HepG2 (cell line): ENCODE measurements at regions of chr13 and their contacts with region 1.

Region 1: DNA sequence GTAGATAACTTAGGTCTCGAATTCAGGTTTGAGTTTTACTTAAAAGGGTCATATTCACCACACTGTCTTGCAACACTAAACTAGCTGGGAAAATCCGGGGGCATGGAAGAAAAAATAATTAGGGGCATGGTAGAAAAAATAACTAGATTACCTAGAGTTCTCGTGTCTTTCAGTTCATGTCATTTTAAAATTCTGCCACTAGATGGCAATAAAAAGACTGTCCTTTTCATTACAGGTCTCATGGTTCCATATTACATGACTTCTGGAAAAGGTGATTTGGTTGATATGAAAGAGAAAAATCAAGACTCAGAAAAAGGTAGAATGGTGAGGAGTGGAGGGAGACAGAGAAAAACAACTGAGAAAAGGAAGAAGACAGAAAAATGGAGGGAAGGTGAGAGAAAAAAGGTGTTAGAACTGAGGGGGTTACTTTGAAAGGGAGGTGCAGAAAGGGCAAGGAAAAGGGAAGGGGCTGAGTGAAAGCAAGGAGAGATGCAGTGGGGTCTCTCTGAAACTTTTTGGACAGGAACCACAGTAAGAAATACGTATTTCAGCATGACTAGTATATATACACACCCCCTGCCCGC is 299.0 kb downstream of the KLF12 start:
- DNase-seq: peak; percentile 39
- ATAC-seq: peak; percentile 69
- H3K4me3 ChIP-seq: no peak overlapping the region
- H3K27ac ChIP-seq: no peak overlapping the region
- H3K4me1 ChIP-seq: no peaks in the 10 kb centered on the region
- H3K27me3 ChIP-seq: no peaks in the 10 kb centered on the region
- CTCF ChIP-seq: peak; percentile 63
- EP300 ChIP-seq: no peak
- POLR2A ChIP-seq: no peak
- RAD21 ChIP-seq: no peak

Region 2: GRCh38 chr13:73465617-73465971 is 369.6 kb before region 1 on chr13:
- CTCF ChIA-PET with region 1: no interaction called
- POLR2A ChIA-PET with region 1: no interaction called
- in situ Hi-C with region 1: no loop called
- intact Hi-C with region 1: no loop called
- DNase-seq: no peak
- ATAC-seq: no peak
- H3K4me3 ChIP-seq: no peak overlapping the region
- H3K27ac ChIP-seq: no peak overlapping the region
- H3K4me1 ChIP-seq: no peaks in the 10 kb centered on the region
- H3K27me3 ChIP-seq: no peaks in the 10 kb centered on the region
- CTCF ChIP-seq: no peak
- EP300 ChIP-seq: no peak
- POLR2A ChIP-seq: no peak
- RAD21 ChIP-seq: no peak

Region 3: DNA sequence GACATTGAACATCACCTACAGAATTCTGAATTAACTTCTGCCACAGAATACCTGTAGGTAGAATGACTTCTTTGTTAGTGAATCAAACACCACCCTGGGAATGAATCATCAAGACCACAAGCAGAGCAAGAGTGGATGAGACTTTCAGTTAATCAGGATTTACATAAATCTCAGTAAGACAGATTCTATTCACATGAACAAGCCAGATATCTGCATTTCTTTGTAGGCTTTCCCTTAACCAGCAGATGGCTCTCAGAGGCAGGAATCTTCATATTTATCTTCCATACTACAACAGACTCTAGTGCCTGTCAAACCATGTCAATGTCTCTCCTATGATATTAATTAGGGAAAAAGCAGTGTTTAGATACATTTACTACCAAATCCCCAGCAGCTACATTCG is 113.1 kb before region 1 on chr13:
- CTCF ChIA-PET with region 1: no interaction called
- POLR2A ChIA-PET with region 1: no interaction called
- in situ Hi-C with region 1: no loop called
- intact Hi-C with region 1: no loop called
- DNase-seq: peak; percentile 5
- ATAC-seq: 0 out of 3 replicates have a peak, but pooled peaks have one; percentile 40
- H3K4me3 ChIP-seq: no peak overlapping the region
- H3K27ac ChIP-seq: no peak overlapping the region
- H3K4me1 ChIP-seq: peaks cover 10% of the 10 kb centered on the region; the same call in 1 of the 2 replicates
- H3K27me3 ChIP-seq: no peaks in the 10 kb centered on the region
- CTCF ChIP-seq: no peak
- EP300 ChIP-seq: no peak
- POLR2A ChIP-seq: no peak
- RAD21 ChIP-seq: no peak

Region 4: GRCh38 chr13:73820688-73821087 is 14.5 kb before region 1 on chr13:
- CTCF ChIA-PET with region 1: no interaction called
- POLR2A ChIA-PET with region 1: no interaction called
- in situ Hi-C with region 1: no loop called
- intact Hi-C with region 1: no loop called
- DNase-seq: no peak
- ATAC-seq: no peak
- H3K4me3 ChIP-seq: no peak overlapping the region
- H3K27ac ChIP-seq: no peak overlapping the region
- H3K4me1 ChIP-seq: no peaks in the 10 kb centered on the region
- H3K27me3 ChIP-seq: no peaks in the 10 kb centered on the region
- CTCF ChIP-seq: no peak
- EP300 ChIP-seq: no peak
- POLR2A ChIP-seq: no peak
- RAD21 ChIP-seq: no peak

Region 5: GRCh38 chr13:74026753-74027152 is 191.5 kb after region 1 on chr13:
- CTCF ChIA-PET with region 1: no interaction called
- POLR2A ChIA-PET with region 1: no interaction called
- in situ Hi-C with region 1: no loop called
- intact Hi-C with region 1: loop called (anchors 10 kb)
- DNase-seq: no peak
- ATAC-seq: no peak
- H3K4me3 ChIP-seq: no peak overlapping the region
- H3K27ac ChIP-seq: no peak overlapping the region
- H3K4me1 ChIP-seq: peaks cover 35% of the 10 kb centered on the region
- H3K27me3 ChIP-seq: no peaks in the 10 kb centered on the region
- CTCF ChIP-seq: no peak
- EP300 ChIP-seq: no peak
- POLR2A ChIP-seq: no peak
- RAD21 ChIP-seq: no peak

Region 6: DNA sequence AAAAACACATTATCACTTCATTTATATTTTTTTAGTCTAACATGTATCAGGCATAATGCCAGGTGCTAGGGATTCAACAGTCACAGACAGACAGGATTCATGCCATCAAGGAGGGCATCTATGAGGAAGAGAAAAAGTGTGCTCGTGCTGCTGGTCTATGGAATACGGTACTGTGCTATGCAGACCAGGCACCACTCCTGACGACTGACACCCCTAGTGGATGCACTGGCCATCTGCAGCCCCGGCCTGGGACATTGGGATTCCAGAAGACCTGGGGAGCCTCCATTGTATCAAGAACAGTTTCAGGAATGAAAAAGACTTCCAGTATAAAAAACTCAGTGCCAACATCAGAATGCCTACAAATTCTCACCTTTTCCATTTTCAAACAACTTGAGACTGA is 205.0 kb after region 1 on chr13:
- CTCF ChIA-PET with region 1: no interaction called
- POLR2A ChIA-PET with region 1: no interaction called
- in situ Hi-C with region 1: no loop called
- intact Hi-C with region 1: loop called (anchors 2 kb)
- DNase-seq: peak; percentile 49
- ATAC-seq: peak; percentile 100
- H3K4me3 ChIP-seq: no peak overlapping the region
- H3K27ac ChIP-seq: no peak overlapping the region
- H3K4me1 ChIP-seq: no peaks in the 10 kb centered on the region
- H3K27me3 ChIP-seq: no peaks in the 10 kb centered on the region
- CTCF ChIP-seq: peak; percentile 74
- EP300 ChIP-seq: no peak
- POLR2A ChIP-seq: no peak
- RAD21 ChIP-seq: peak; percentile 42; the same call in 1 of the 2 replicates

Region 7: DNA sequence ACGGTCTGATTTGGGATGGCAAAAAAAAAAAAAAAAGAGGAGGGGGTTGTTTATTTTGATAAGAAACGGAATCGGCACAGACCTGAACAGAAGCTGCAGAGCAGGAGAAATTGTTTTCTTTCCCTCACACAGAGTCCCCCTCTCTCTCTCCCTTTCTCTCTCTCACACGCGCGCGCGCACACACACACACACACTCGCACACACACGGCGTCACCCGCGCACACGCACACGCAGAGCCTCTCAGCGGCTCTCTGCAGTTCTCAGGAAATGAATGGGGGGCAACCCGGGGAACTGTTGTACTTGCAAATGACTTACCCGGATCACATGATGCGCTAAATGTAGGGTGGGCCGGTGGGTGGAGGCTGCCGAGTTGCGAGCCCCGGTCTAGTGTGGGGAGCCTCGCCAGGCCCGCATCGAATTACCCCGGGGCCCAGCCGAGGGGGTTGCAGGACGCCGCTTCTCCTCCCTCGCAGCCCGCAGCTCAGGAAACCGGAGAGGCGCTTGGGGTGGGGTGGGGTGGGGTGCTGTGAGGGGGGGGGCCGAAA is 298.5 kb after region 1 on chr13:
- CTCF ChIA-PET with region 1: no interaction called
- POLR2A ChIA-PET with region 1: no interaction called
- in situ Hi-C with region 1: no loop called
- intact Hi-C with region 1: loop called (anchors 10 kb)
- DNase-seq: peak; percentile 35
- ATAC-seq: peak; percentile 45
- H3K4me3 ChIP-seq: peak overlapping the region; percentile 59 to 72 (median 64)
- H3K27ac ChIP-seq: peak overlapping the region; percentile 33
- H3K4me1 ChIP-seq: peaks cover 52% of the 10 kb centered on the region
- H3K27me3 ChIP-seq: peaks cover 0 to 31% of the 10 kb centered on the region in 2 experiments; a peak in 1 of 5 replicates
- CTCF ChIP-seq: no peak
- EP300 ChIP-seq: no peak
- POLR2A ChIP-seq: no peak
- RAD21 ChIP-seq: no peak

Region 8: DNA sequence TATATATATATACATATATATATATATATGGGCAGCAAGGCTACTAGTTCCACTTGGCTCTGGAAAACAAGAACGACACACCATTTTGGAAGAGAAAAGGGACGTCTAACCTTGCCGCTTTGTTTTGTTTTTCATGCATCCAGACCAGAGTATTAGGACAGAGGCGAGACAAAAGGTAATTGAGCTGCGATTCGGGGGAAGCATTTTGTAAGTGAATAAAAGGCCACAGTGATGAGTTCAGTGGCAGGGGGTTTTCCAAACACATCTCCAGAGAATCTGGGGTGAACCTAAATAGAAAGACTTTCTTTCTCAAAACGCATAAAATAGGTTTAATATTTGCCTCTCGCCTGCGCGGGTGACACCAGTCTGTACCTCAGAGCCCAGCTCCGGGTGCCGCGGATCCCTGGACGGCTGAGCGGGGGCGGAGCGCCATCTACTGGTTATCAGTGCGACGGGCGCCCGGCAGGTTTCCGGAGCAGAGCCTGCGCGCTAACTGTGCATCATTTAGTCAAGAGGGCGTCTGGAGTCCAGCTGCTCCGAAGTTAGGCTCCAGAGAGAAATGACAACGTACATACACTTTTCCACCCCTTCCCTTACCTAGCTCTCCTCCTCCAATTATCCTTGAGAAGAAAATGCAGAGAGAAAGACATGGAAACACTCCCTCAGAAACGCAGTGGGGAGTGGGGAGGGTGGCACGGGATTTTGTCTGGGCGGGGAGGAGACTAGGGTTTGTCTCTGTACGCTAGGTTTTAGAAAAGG is 1384.4 kb after region 1 on chr13:
- CTCF ChIA-PET with region 1: interaction called, 10 read pairs
- POLR2A ChIA-PET with region 1: no interaction called
- in situ Hi-C with region 1: loop called (anchors 25 kb)
- intact Hi-C with region 1: loop called (anchors 1 kb)
- DNase-seq: peak; percentile 25
- ATAC-seq: peak; percentile 100
- H3K4me3 ChIP-seq: no peak overlapping the region
- H3K27ac ChIP-seq: no peak overlapping the region
- H3K4me1 ChIP-seq: no peaks in the 10 kb centered on the region
- H3K27me3 ChIP-seq: peaks cover 0 to 8% of the 10 kb centered on the region in 2 experiments; a peak in 3 of 5 replicates
- CTCF ChIP-seq: peak; percentile 95
- EP300 ChIP-seq: no peak
- POLR2A ChIP-seq: no peak
- RAD21 ChIP-seq: peak; percentile 84

Region 9: GRCh38 chr13:75258159-75258782 is 1423.0 kb after region 1 on chr13:
- CTCF ChIA-PET with region 1: no interaction called
- POLR2A ChIA-PET with region 1: no interaction called
- in situ Hi-C with region 1: no loop called
- intact Hi-C with region 1: loop called (anchors 5 kb)
- DNase-seq: peak; percentile 16
- ATAC-seq: peak; percentile 53; the same call in 2 of the 3 replicates
- H3K4me3 ChIP-seq: no peak overlapping the region
- H3K27ac ChIP-seq: no peak overlapping the region
- H3K4me1 ChIP-seq: no peaks in the 10 kb centered on the region
- H3K27me3 ChIP-seq: no peaks in the 10 kb centered on the region
- CTCF ChIP-seq: peak; percentile 55
- EP300 ChIP-seq: no peak
- POLR2A ChIP-seq: no peak
- RAD21 ChIP-seq: no peak